Caco-2 (cell line): ENCODE measurements at regions of chr15 and their contacts with region 1.

Region 1: GRCh38 chr15:35697549-35698299 is 151.8 kb upstream of the DPH6 start:
- DNase-seq: peak; percentile 61 to 73
- H3K4me3 ChIP-seq: peak overlapping the region; percentile 4; the same call in 1 of the 2 replicates
- H3K4me3 Mint-ChIP-seq: peak overlapping the region; percentile 61
- H3K27ac Mint-ChIP-seq: peak overlapping the region; percentile 96
- H3K4me1 ChIP-seq: peaks cover 84% of the 10 kb centered on the region
- H3K4me1 Mint-ChIP-seq: peaks cover 55% of the 10 kb centered on the region
- H3K27me3 ChIP-seq: no peaks in the 10 kb centered on the region
- H3K27me3 Mint-ChIP-seq: no peaks in the 10 kb centered on the region
- CTCF ChIP-seq: peak; percentile 16 to 17

Region 2: DNA sequence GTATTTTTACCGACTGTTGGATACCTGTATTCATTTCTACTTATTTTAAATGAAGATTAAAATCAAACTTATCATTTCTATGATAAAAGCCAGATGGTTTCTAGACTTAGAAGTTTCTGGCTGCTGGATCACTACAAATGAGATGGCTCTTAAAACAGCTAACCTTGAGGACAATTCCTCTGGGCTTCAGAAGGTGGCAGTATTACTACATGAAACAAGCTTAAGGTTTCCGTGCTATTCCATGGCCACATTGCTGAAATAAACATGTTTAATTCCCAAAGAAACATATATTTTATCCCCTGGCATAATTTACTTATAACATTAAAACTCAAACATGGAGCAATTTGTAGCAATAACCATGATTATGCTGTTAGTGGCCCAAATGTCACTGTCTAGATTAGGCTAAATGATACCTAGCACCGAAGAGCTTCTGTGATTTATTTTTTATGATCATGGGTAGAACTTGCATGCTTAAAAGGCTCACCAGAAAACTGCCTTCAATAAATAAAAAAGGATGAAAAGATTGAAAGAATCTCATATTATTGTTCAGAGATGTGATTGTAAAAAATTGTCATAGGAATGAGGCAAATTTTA is 408.6 kb before region 1 on chr15:
- CTCF ChIA-PET with region 1: no interaction called
- POLR2A ChIA-PET with region 1: no interaction called
- intact Hi-C with region 1: loop called (anchors 5 kb)
- DNase-seq: peak in 1 of 2 experiments; percentile 51
- H3K4me3 ChIP-seq: no peak overlapping the region
- H3K4me3 Mint-ChIP-seq: no peak overlapping the region
- H3K27ac Mint-ChIP-seq: no peak overlapping the region
- H3K4me1 ChIP-seq: peaks cover 12% of the 10 kb centered on the region
- H3K4me1 Mint-ChIP-seq: peaks cover 10% of the 10 kb centered on the region
- H3K27me3 ChIP-seq: no peaks in the 10 kb centered on the region
- H3K27me3 Mint-ChIP-seq: no peaks in the 10 kb centered on the region
- CTCF ChIP-seq: peak; percentile 69 to 73

Region 3: GRCh38 chr15:35545824-35546510 is 151.8 kb before region 1 on chr15 and contains the start of gene DPH6:
- CTCF ChIA-PET with region 1: no interaction called
- POLR2A ChIA-PET with region 1: no interaction called
- intact Hi-C with region 1: loop called (anchors 5 kb)
- DNase-seq: peak; percentile 89 to 90
- H3K4me3 ChIP-seq: peak within 1 kb of the TSS; percentile 48
- H3K4me3 Mint-ChIP-seq: peak within 1 kb of the TSS; percentile 92
- H3K27ac Mint-ChIP-seq: peak within 1 kb of the TSS; percentile 96
- H3K4me1 ChIP-seq: peaks cover 6% of the 10 kb centered on the region; the same call in 1 of the 2 replicates
- H3K4me1 Mint-ChIP-seq: peaks cover 12% of the 10 kb centered on the region
- H3K27me3 ChIP-seq: no peaks in the 10 kb centered on the region
- H3K27me3 Mint-ChIP-seq: no peaks in the 10 kb centered on the region
- CTCF ChIP-seq: peak in 1 of 2 experiments; percentile 11
- total RNA-seq, gene DPH6: 24.0 and 27.1 TPM in 2 replicates

Region 4: DNA sequence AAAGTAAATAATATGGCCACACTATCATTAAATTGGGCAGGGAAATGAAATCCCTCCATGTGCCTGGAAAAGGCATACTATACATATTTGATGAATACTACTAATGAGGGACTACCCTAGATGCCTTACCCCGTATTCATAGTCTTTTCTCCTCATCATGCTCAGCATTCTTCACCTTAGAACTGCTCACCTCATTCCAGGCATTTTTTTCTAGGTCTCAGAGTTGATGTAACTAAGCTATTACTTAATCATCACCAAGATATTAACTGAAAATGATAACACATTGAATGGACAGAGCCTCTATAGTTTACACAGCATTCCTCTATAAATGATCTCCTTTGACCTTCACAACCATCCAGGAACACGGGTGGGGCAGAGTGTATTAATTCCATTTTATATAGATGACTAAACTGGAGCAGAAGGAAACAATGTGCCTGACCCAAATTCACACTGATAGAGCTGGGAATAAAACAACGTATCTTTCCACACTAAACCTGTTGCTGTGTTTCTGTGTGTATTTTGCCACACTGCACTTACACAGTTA is 22.3 kb after region 1 on chr15:
- CTCF ChIA-PET with region 1: no interaction called
- POLR2A ChIA-PET with region 1: no interaction called
- intact Hi-C with region 1: loop called (anchors 2 kb)
- DNase-seq: no peak
- H3K4me3 ChIP-seq: no peak overlapping the region
- H3K4me3 Mint-ChIP-seq: no peak overlapping the region
- H3K27ac Mint-ChIP-seq: no peak overlapping the region
- H3K4me1 ChIP-seq: peaks cover 7% of the 10 kb centered on the region
- H3K4me1 Mint-ChIP-seq: peaks cover 10% of the 10 kb centered on the region
- H3K27me3 ChIP-seq: no peaks in the 10 kb centered on the region
- H3K27me3 Mint-ChIP-seq: no peaks in the 10 kb centered on the region
- CTCF ChIP-seq: no peak

Region 5: DNA sequence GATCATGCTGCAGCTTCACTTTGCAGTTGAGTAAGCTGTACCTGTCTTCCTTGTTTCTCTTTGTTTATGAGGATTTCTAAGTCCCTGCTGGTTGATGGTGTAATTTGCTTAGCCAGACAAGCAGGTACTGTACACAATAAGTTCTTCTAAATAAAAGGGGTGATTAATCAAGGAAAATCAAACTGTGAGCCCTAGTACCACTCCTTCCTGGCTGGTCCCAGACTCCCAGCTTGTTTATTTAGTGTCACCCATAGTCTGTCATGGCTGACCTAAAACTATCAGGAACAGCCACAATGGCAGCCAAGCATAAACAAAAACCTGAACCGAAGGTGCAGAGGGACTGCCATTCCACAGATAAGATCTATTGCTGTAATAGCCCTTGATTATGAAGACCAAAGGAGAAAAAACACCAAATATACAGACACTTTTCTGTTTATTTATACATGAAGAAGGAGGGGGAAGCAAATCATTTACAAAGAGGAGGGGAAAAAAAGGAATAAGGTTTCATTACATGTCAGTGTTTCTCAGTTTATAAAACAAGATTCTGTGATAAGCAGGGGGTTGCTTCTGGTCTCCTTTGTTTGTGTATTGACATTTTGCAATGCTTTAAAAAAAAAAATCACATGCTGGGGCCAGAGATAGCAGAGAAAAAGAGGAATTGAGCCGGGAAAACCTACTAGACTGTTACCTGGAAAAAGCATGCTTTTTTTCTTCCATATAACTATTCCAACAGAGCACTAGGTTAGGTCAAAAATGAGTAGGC is 30.6 kb after region 1 on chr15:
- CTCF ChIA-PET with region 1: no interaction called
- POLR2A ChIA-PET with region 1: no interaction called
- intact Hi-C with region 1: loop called (anchors 1 kb)
- DNase-seq: peak; percentile 44 to 56
- H3K4me3 ChIP-seq: no peak overlapping the region
- H3K4me3 Mint-ChIP-seq: peak overlapping the region; percentile 58
- H3K27ac Mint-ChIP-seq: peak overlapping the region; percentile 80
- H3K4me1 ChIP-seq: peaks cover 18% of the 10 kb centered on the region
- H3K4me1 Mint-ChIP-seq: peaks cover 28% of the 10 kb centered on the region
- H3K27me3 ChIP-seq: no peaks in the 10 kb centered on the region
- H3K27me3 Mint-ChIP-seq: no peaks in the 10 kb centered on the region
- CTCF ChIP-seq: no peak

Region 6: GRCh38 chr15:35743320-35743719 is 45.6 kb after region 1 on chr15:
- CTCF ChIA-PET with region 1: no interaction called
- POLR2A ChIA-PET with region 1: no interaction called
- intact Hi-C with region 1: no loop called
- DNase-seq: no peak
- H3K4me3 ChIP-seq: no peak overlapping the region
- H3K4me3 Mint-ChIP-seq: no peak overlapping the region
- H3K27ac Mint-ChIP-seq: no peak overlapping the region
- H3K4me1 ChIP-seq: no peaks in the 10 kb centered on the region
- H3K4me1 Mint-ChIP-seq: no peaks in the 10 kb centered on the region
- H3K27me3 ChIP-seq: no peaks in the 10 kb centered on the region
- H3K27me3 Mint-ChIP-seq: no peaks in the 10 kb centered on the region
- CTCF ChIP-seq: no peak

Region 7: GRCh38 chr15:35912196-35912595 is 214.5 kb after region 1 on chr15:
- CTCF ChIA-PET with region 1: no interaction called
- POLR2A ChIA-PET with region 1: no interaction called
- intact Hi-C with region 1: loop called (anchors 10 kb)
- DNase-seq: no peak
- H3K4me3 ChIP-seq: no peak overlapping the region
- H3K4me3 Mint-ChIP-seq: no peak overlapping the region
- H3K27ac Mint-ChIP-seq: no peak overlapping the region
- H3K4me1 ChIP-seq: no peaks in the 10 kb centered on the region
- H3K4me1 Mint-ChIP-seq: no peaks in the 10 kb centered on the region
- H3K27me3 ChIP-seq: no peaks in the 10 kb centered on the region
- H3K27me3 Mint-ChIP-seq: no peaks in the 10 kb centered on the region
- CTCF ChIP-seq: no peak

Region 8: GRCh38 chr15:35953424-35953823 is 255.7 kb after region 1 on chr15:
- CTCF ChIA-PET with region 1: no interaction called
- POLR2A ChIA-PET with region 1: no interaction called
- intact Hi-C with region 1: loop called (anchors 5 kb)
- DNase-seq: peak in 1 of 2 experiments; percentile 3
- H3K4me3 ChIP-seq: no peak overlapping the region
- H3K4me3 Mint-ChIP-seq: no peak overlapping the region
- H3K27ac Mint-ChIP-seq: no peak overlapping the region
- H3K4me1 ChIP-seq: peaks cover 22% of the 10 kb centered on the region
- H3K4me1 Mint-ChIP-seq: peaks cover 17% of the 10 kb centered on the region
- H3K27me3 ChIP-seq: no peaks in the 10 kb centered on the region
- H3K27me3 Mint-ChIP-seq: no peaks in the 10 kb centered on the region
- CTCF ChIP-seq: no peak